A673 (cell line): ENCODE measurements at regions of chr22 and their contacts with region 1.

Region 1: DNA sequence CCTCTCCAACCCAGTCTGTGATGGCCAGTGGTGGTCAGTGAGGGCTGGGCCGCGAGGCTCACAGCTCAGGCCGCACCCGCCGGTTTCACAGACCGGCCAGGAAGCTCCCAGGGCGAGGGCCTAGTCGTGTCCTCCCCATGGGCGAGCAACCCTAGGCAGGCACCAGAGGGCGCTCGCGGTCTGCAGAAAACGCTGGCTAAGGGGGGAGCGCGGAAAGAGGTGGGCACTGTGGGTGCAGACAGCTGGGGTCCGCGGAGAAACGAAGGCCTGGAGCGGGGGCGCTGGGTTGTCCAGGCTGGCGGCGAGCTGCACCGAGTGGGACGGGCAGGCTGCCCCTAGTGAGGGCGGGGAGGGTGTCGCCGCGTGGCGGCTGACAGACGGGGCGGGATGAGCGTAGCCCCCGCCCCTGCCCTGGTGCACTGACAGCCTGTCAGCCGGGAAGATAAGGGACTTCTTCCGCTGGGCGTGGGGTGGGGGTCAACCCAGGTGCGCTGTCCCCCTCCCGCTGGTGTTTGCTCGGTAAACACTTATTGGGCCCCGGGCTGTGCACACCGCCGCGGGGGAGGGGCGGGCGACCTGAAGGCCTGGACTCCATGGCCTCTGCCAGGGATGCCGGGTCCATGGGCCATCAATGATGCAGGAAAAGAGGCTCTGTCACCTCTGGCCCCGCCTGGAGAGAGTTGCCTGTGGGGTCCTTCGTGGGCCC is 7.5 kb downstream of the GP1BB start:
- DNase-seq: peak; percentile 83
- H3K4me3 ChIP-seq: peak overlapping the region; percentile 43
- H3K27ac ChIP-seq: no peak overlapping the region
- H3K4me1 ChIP-seq: no peaks in the 10 kb centered on the region
- H3K27me3 ChIP-seq: no peaks in the 10 kb centered on the region
- CTCF ChIP-seq: peak; percentile 98

Region 2: DNA sequence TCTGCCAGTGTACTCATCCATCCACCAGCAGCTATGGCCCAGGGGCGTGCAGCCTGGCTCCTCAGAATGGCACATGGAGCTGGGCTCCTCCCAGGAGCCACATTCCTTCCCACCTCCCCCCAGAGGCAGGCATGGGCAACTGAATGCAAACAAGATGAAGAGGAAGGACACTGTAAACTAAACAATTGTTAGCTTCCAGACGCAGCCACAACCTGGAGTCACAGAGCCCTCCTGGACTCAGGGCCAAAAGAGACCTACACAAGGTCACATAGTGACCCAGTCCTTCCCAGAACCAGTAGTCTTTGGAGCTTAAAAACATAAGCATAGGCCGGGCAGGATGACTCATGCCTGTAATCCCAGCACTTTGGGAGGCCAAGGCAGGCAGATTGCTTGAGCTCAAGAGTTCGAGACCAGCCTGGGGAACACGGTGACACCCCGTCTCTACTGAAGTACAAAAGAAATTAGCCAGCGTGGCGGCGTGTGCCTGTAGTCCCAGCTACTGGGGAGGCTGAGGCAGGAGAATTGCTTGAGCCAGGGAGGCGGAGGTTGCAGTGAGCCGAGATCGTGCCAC is 175.9 kb before region 1 on chr22:
- CTCF ChIA-PET with region 1: no interaction called
- POLR2A ChIA-PET with region 1: no interaction called
- intact Hi-C with region 1: no loop called
- DNase-seq: peak; percentile 34
- H3K4me3 ChIP-seq: no peak overlapping the region
- H3K27ac ChIP-seq: no peak overlapping the region
- H3K4me1 ChIP-seq: no peaks in the 10 kb centered on the region
- H3K27me3 ChIP-seq: no peaks in the 10 kb centered on the region
- CTCF ChIP-seq: 0 out of 2 replicates have a peak, but pooled peaks have one; percentile 12

Region 3: GRCh38 chr22:19663286-19663815 is 67.5 kb before region 1 on chr22:
- CTCF ChIA-PET with region 1: interaction called, 15 read pairs
- POLR2A ChIA-PET with region 1: no interaction called
- intact Hi-C with region 1: no loop called
- DNase-seq: peak; percentile 28
- H3K4me3 ChIP-seq: peak overlapping the region; percentile 15
- H3K27ac ChIP-seq: peak overlapping the region; percentile 55
- H3K4me1 ChIP-seq: peaks cover 37% of the 10 kb centered on the region
- H3K27me3 ChIP-seq: no peaks in the 10 kb centered on the region
- CTCF ChIP-seq: no peak

Region 4: DNA sequence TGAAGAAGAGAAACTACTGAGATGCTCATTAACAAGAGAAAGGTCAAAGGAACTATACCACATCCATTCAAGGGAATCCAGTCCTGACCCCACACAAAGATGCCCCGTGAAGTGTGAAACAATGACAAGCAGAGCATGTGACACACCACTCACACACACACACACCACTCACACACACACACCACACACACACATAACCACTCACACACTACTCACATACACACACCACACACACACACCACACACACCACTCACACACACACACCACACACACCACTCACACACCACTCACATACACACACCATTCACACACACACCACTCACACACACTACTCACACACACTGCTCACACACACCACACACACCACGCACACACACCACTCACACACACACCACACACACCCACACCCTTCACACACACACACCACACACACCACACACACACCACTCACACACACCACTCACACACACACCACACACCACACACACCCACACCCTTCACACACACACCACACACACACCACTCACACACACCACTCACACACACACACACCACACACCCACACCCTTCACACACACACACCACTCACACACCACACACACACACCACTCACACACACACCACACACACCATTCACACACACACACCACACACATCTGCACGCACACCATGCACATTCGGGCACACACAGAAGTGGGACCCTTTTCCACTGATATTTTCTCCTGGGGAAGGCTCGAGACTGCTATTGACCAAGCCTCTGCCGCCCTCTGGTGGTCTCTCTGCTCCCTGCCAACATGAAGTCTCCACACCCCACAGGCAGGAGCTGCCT is 178.8 kb after region 1 on chr22:
- CTCF ChIA-PET with region 1: interaction called, 79 read pairs
- POLR2A ChIA-PET with region 1: no interaction called
- intact Hi-C with region 1: loop called (anchors 1 kb)
- DNase-seq: peak; percentile 86
- H3K4me3 ChIP-seq: no peak overlapping the region
- H3K27ac ChIP-seq: no peak overlapping the region
- H3K4me1 ChIP-seq: no peaks in the 10 kb centered on the region
- H3K27me3 ChIP-seq: no peaks in the 10 kb centered on the region
- CTCF ChIP-seq: peak; percentile 98

Region 5: GRCh38 chr22:19941365-19942082 is 210.7 kb after region 1 on chr22 and contains the starts of genes COMT and TXNRD2:
- CTCF ChIA-PET with region 1: interaction called, 22 read pairs
- POLR2A ChIA-PET with region 1: no interaction called
- intact Hi-C with region 1: no loop called
- DNase-seq: peak; percentile 78
- H3K4me3 ChIP-seq: peak within 1 kb of the TSS; percentile 81
- H3K27ac ChIP-seq: peak within 1 kb of the TSS; percentile 98
- H3K4me1 ChIP-seq: peaks cover 29% of the 10 kb centered on the region
- H3K27me3 ChIP-seq: no peaks in the 10 kb centered on the region
- CTCF ChIP-seq: no peak
- total RNA-seq, gene COMT: 87.8 and 98.6 TPM in 2 replicates
- total RNA-seq, gene TXNRD2: 25.2 and 32.6 TPM in 2 replicates

Region 6: GRCh38 chr22:19962233-19962908 is 231.6 kb after region 1 on chr22:
- CTCF ChIA-PET with region 1: interaction called, 4 read pairs
- POLR2A ChIA-PET with region 1: no interaction called
- intact Hi-C with region 1: loop called (anchors 5 kb)
- DNase-seq: peak; percentile 96
- H3K4me3 ChIP-seq: no peak overlapping the region
- H3K27ac ChIP-seq: peak overlapping the region; percentile 17
- H3K4me1 ChIP-seq: peaks cover 32% of the 10 kb centered on the region
- H3K27me3 ChIP-seq: no peaks in the 10 kb centered on the region
- CTCF ChIP-seq: peak; percentile 87